Dorsolateral prefrontal cortex (tissue), 120 donors: ENCODE measurements at regions of chr2 and their contacts with region 1.

Region 1: DNA sequence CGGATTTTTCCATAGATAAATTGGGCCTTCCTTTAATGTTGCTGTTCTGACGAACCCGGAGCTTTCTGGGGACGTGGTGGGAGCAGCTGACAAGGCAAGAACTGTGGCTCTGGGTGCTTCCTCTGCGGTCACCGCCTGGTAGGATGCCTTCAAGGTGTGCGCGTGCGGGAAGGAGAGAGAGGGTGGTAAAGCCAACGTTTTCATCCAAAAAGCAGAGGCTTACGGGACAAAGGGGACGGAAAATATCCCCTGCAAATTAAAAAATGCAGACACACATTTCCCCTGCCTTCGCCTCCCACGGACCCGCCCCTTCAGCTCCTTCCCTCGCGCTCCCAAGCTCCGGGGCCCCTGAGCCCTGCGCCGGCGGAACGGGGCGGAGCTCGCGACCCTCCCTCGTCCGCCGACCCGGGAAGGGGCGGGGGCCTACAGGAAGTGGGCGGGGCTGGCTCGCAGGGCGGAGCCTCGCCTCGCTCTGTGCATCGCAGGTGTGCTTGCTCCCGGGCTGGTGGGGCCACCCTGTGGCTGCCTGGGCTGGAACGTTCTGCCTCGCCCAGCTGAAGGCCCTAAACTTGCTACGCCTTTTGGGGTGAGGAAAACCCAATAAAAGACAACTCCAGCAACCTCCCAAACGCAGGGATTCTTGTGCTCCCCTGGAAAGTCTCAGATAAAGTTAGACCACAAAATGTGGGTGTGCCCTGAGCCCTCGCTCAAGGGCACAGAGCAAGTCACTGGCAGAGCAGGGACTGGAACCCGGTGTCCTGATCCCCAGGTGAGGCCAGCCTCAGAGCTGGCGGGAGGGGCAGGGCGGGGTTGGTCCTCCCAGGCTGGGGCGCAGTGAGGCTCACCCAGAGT is 25.4 kb upstream of the SLC66A3 start:
- DNase-seq: peak in 3 of 10 donors; percentile 48 to 65 (median 50)
- H3K4me3 ChIP-seq: peak overlapping the region in 58 of 59 donors; percentile 13 to 71 (median 51)
- H3K27ac ChIP-seq: peak overlapping the region in 32 of 59 donors; percentile 2 to 81 (median 38)
- H3K27me3 ChIP-seq: peaks cover 0 to 8% (median 0%) of the 10 kb centered on the region in 45 donors
- CTCF ChIP-seq: peak in 28 of 56 donors; percentile 6 to 50 (median 25)

Region 2: DNA sequence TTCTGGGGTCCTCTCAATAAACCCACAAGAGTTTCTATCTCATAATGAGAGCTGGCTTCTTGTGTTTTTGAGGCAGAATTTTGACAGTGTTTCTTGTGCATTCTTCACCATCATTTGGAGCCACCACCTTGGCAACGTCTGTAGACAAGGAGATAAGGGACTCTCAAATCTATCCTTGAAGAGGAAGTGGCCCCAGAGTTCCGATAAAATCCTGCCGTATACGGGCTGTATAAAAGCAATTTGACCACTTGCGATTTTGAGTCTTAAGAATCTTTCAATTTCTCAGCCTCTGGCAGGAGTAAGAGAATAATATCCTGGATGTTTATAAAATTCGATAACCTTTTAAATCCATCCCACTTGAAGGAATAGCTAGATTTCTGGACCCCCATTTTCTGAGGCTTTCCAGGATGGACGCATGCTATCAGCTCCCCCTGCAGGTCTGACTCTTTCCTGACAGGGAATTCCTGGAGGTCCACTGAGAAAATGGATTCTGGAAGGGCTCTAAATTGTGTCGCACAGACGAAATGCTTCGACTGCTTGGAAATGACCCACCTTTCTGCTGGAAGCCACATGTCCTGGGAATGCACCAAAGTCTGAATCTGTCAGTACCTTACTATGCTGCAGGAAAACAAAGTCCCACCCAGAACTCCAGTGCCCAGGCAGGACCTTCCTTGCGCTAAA is 282.1 kb after region 1 on chr2:
- intact Hi-C with region 1: loop called (anchors 5 kb)
- DNase-seq: peak in 4 of 10 donors; percentile 32 to 64 (median 52)
- H3K4me3 ChIP-seq: peak overlapping the region in 55 of 59 donors; percentile 1 to 62 (median 39)
- H3K27ac ChIP-seq: peak overlapping the region in 1 of 59 donors; percentile 36
- H3K27me3 ChIP-seq: no peaks in the 10 kb centered on the region
- CTCF ChIP-seq: peak; percentile 64 to 93 (median 83)

Region 3: DNA sequence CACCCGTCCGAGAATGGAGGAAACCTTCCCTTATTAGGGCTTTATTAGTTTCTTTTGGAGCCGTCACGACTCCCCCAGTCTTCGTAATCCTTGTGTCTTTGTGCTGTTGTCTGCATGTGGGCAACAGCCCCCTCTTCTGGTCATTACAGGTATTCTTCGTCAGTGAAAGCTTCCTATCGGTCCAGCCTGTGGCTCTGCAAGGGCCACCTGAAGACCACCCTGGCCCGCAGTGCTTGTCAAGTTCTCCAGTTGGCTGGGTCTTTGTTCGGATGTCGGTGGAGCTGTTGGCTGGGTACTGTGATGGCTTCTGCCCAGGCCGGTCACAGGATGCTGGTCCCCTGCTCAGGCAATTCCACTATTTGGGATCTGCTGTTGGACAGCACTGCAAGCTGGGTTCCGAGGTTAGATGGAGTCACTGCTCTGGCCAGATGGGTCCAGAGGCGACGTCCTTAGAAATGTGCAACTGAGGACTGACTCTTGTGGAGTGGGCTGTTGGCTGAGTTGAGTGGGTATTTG is 317.0 kb after region 1 on chr2:
- intact Hi-C with region 1: loop called (anchors 5 to 10 kb)
- DNase-seq: peak in 8 of 10 donors; percentile 46 to 70 (median 53)
- H3K4me3 ChIP-seq: no peak overlapping the region
- H3K27ac ChIP-seq: peak overlapping the region in 25 of 59 donors; percentile 4 to 60 (median 46)
- H3K27me3 ChIP-seq: no peaks in the 10 kb centered on the region
- CTCF ChIP-seq: peak; percentile 57 to 90 (median 83)

Region 4: DNA sequence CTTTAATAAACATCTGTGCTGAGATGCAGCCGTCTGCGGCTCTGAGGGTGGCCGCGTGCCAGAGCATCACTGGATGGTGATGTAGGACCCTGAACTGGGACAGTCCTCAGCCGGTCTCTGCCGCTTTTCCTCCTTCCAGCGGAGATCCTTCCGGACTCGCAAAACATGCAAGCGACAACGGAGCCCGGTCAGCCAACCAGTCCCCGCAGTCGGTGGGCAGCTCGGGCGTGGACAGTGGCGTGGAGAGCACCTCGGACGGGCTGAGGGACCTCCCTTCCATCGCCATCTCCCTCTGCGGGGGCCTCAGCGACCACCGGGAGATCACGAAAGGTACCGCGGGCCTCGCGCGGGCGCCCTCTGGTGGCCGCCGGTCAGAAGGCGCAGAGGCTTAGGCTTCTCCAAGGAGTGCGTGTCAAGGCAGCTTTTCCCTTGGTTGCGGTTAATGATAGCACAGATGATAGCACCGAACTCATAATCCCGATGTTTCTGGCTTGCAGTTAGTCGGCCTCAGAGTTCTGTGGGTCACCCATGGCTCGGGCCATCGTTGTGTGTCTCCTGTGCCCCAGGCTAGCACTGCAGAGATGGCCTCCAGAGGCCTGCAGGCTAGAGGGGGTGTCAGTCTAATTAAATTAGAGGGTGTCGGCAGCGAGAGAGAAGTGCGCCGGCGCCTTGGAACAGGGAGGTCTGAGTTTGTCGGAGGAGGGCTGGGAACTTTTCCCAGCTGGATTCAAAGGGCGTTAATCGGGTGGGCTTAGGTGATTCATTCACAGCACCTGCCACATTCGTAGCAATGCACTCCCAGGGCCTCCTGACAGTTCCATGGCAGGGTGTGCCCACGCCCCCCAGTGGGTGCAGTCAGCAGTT is 655.2 kb after region 1 on chr2:
- intact Hi-C with region 1: loop called in 1 of 2 experiments (anchors 10 kb)
- DNase-seq: peak in 9 of 10 donors; percentile 53 to 78 (median 66)
- H3K4me3 ChIP-seq: peak overlapping the region in 57 of 59 donors; percentile 5 to 71 (median 49)
- H3K27ac ChIP-seq: peak overlapping the region in 48 of 59 donors; percentile 0 to 78 (median 52)
- H3K27me3 ChIP-seq: no peaks in the 10 kb centered on the region
- CTCF ChIP-seq: peak; percentile 64 to 97 (median 94)